Natural killer cell (primary cell): ENCODE measurements at regions of chr1 and their contacts with region 1.

Region 1: GRCh38 chr1:45569962-45570581 is 13.8 kb upstream of the NASP start:
- DNase-seq: peak; percentile 59 to 87
- ATAC-seq: peak; percentile 93 to 100 (median 97)
- H3K4me3 ChIP-seq: no peak overlapping the region
- H3K4me3 Mint-ChIP-seq: no peak overlapping the region
- H3K27ac ChIP-seq: no peak overlapping the region
- H3K27ac Mint-ChIP-seq: peak overlapping the region in 1 of 2 donors; percentile 11
- H3K4me1 ChIP-seq: no peaks in the 10 kb centered on the region
- H3K4me1 Mint-ChIP-seq: no peaks in the 10 kb centered on the region
- H3K27me3 ChIP-seq: no peaks in the 10 kb centered on the region
- H3K27me3 Mint-ChIP-seq: no peaks in the 10 kb centered on the region
- CTCF ChIP-seq: peak; percentile 94

Region 2: DNA sequence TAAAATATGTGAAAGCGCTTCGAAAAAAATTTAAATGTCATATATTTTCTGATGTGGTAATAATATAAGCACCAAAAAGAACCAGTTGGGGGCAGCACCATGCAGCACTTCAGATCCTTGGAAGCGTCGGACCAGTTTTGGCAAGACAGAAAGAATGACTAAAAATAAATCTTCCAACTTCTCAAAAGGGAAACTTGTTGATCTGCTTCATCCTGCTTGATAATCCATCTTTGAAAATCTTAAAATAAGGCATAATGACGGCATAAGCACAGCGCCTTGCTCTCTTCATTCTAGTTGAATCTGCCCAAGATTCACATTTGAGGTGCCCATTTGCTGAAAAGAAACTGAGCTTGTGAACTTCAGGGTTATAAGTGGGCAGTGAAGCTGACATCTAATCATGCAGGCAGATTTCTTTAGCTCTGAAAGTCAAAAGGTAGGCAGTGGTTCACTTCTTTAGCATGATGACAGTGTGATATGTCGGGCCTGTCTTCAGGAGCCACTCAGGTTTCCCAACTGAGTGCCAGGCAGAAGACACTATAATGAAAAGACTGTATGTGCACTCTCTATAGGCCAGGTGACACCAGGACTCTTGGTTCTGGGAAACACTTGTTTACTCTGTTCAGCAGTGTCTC is 210.1 kb before region 1 on chr1:
- intact Hi-C with region 1: loop called (anchors 1 kb)
- DNase-seq: peak; percentile 35 to 74
- ATAC-seq: peak; percentile 52 to 71 (median 55)
- H3K4me3 ChIP-seq: no peak overlapping the region
- H3K4me3 Mint-ChIP-seq: no peak overlapping the region
- H3K27ac ChIP-seq: no peak overlapping the region
- H3K27ac Mint-ChIP-seq: no peak overlapping the region
- H3K4me1 ChIP-seq: no peaks in the 10 kb centered on the region
- H3K4me1 Mint-ChIP-seq: peaks cover 0 to 4% of the 10 kb centered on the region in 2 donors
- H3K27me3 ChIP-seq: no peaks in the 10 kb centered on the region
- H3K27me3 Mint-ChIP-seq: no peaks in the 10 kb centered on the region
- CTCF ChIP-seq: peak; percentile 64

Region 3: DNA sequence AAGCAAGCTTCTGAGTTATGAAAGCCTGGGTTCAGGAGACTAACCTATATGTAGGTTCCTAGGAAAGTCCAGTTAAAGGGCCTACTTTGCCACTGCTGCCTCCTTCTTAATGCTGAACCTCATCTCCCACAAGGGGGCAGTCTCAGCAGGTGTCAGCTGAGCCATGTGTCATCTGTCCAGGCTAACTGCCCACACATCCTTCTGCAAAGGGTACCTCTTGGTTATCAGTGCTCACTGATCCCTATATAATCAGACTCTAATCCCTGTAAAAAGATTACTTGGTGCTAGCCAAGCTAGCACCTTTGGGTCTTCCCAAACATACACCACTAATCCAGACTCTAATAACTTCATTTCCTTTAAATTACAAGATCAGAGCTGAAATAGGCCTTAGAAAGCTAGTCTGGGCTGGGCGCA is 57.4 kb before region 1 on chr1:
- intact Hi-C with region 1: loop called (anchors 1 kb)
- DNase-seq: peak; percentile 43 to 81
- ATAC-seq: peak; percentile 68 to 91 (median 83)
- H3K4me3 ChIP-seq: no peak overlapping the region
- H3K4me3 Mint-ChIP-seq: no peak overlapping the region
- H3K27ac ChIP-seq: no peak overlapping the region
- H3K27ac Mint-ChIP-seq: no peak overlapping the region
- H3K4me1 ChIP-seq: no peaks in the 10 kb centered on the region
- H3K4me1 Mint-ChIP-seq: no peaks in the 10 kb centered on the region
- H3K27me3 ChIP-seq: no peaks in the 10 kb centered on the region
- H3K27me3 Mint-ChIP-seq: no peaks in the 10 kb centered on the region
- CTCF ChIP-seq: peak; percentile 76

Region 4: DNA sequence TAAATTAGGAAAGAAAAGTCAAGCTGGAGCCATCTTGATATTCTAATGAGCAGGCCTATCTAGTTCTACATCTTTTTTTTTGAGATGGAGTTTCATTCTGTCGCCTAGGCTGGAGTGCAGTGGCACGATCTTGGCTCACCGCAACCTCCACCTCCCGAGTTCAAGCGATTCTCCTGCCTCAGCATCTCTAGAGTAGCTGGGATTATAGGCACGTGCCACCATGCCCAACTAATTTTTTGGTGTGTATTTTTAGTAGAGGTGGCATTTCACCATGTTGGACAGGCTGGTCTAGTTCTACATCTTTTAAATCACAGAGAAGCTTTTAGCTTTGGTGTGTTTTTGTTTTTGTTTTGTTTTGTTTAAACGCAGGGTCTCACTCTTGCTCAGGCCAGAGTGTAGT is 124.8 kb after region 1 on chr1:
- intact Hi-C with region 1: no loop called
- DNase-seq: no peak
- ATAC-seq: no peak
- H3K4me3 ChIP-seq: no peak overlapping the region
- H3K4me3 Mint-ChIP-seq: no peak overlapping the region
- H3K27ac ChIP-seq: no peak overlapping the region
- H3K27ac Mint-ChIP-seq: no peak overlapping the region
- H3K4me1 ChIP-seq: no peaks in the 10 kb centered on the region
- H3K4me1 Mint-ChIP-seq: no peaks in the 10 kb centered on the region
- H3K27me3 ChIP-seq: no peaks in the 10 kb centered on the region
- H3K27me3 Mint-ChIP-seq: no peaks in the 10 kb centered on the region
- CTCF ChIP-seq: no peak